ENCODE measurements at regions of chr7 and their contacts with region 1.

Region 1: DNA sequence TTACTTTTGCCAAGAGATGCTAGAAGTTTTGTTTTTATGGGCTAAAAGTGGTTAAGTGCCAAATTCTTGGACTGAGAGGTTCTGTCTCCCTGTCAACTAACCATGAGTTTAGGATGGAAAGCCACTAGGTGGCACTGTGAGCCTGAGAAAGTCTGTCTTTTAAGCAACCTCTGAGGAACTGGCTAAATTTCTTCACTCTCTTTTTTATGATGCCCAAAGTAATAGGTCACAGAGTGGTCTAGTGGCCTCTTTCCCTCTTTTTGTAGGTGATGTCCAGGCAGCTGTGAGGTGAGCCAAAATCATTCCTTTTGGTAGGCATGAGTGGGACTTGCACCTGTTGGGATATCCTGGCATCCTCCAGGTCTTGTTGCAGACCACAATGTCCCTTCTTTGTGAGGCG is 56.8 kb downstream of the SND1 start:
- DNase-seq: peak; percentile 61 to 71 (median 64)
- H3K4me3 ChIP-seq: no peak overlapping the region
- H3K4me3 Mint-ChIP-seq: no peak overlapping the region
- H3K27ac ChIP-seq: no peak overlapping the region
- H3K27ac Mint-ChIP-seq: no peak overlapping the region
- H3K4me1 ChIP-seq: no peaks in the 10 kb centered on the region
- H3K4me1 Mint-ChIP-seq: peaks cover 0 to 6% (median 2%) of the 10 kb centered on the region in 4 donors
- H3K27me3 ChIP-seq: no peaks in the 10 kb centered on the region
- H3K27me3 Mint-ChIP-seq: no peaks in the 10 kb centered on the region

Region 2: GRCh38 chr7:127726476-127726875 is 17.7 kb after region 1 on chr7:
- CTCF ChIA-PET with region 1: interaction called, 27 read pairs
- POLR2A ChIA-PET with region 1: no interaction called
- intact Hi-C with region 1: no loop called
- DNase-seq: no peak
- H3K4me3 ChIP-seq: no peak overlapping the region
- H3K4me3 Mint-ChIP-seq: no peak overlapping the region
- H3K27ac ChIP-seq: no peak overlapping the region
- H3K27ac Mint-ChIP-seq: peak overlapping the region in 1 of 7 donors; percentile 26
- H3K4me1 ChIP-seq: no peaks in the 10 kb centered on the region
- H3K4me1 Mint-ChIP-seq: peaks cover 0 to 5% (median 3%) of the 10 kb centered on the region in 4 donors
- H3K27me3 ChIP-seq: no peaks in the 10 kb centered on the region
- H3K27me3 Mint-ChIP-seq: no peaks in the 10 kb centered on the region

Region 3: DNA sequence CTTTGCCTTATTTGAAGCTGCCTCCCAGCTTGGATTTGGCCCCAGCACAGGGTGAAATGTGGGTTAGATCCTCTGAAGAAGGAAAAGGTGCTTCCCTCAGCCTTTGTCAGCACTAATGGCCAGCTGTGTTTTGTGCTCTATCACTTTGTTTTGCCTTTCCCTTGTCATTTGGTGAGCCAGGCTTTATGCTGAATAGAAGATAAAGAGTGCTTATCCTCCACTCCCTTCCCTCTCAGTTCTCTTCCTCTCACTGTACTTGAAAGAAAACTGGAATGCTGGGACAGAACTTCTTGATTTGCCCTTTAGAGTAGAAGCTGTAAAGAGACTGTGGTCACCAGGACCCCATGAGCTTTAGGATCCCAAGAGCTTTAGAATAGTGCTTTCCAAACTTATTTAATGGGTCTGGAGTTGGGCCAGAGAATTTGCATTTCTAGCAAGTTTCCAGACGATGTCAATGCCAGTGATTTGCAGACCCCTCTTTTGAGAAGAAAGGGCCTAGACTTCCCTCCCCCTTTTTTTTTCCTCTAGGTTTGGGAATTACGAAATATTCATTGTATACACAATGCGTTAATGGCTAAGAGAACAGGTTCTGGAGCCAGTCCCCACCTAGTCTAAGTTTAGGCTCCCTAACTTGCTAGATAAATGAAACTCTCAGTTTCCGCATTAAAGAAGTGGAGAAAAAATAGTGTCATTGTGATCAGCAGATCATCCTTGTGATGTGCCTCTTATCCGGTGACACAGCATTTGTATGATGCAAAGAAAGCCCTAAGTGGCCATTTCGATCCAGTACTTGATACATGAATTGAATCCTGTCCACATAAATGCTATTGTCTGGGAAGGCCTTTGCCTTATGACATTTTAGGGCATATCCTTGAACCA is 241.2 kb after region 1 on chr7:
- CTCF ChIA-PET with region 1: no interaction called
- POLR2A ChIA-PET with region 1: no interaction called
- intact Hi-C with region 1: no loop called
- DNase-seq: no peak
- H3K4me3 ChIP-seq: no peak overlapping the region
- H3K4me3 Mint-ChIP-seq: no peak overlapping the region
- H3K27ac ChIP-seq: no peak overlapping the region
- H3K27ac Mint-ChIP-seq: no peak overlapping the region
- H3K4me1 ChIP-seq: no peaks in the 10 kb centered on the region
- H3K4me1 Mint-ChIP-seq: peaks cover 0 to 7% (median 2%) of the 10 kb centered on the region in 4 donors
- H3K27me3 ChIP-seq: no peaks in the 10 kb centered on the region
- H3K27me3 Mint-ChIP-seq: no peaks in the 10 kb centered on the region

Region 4: DNA sequence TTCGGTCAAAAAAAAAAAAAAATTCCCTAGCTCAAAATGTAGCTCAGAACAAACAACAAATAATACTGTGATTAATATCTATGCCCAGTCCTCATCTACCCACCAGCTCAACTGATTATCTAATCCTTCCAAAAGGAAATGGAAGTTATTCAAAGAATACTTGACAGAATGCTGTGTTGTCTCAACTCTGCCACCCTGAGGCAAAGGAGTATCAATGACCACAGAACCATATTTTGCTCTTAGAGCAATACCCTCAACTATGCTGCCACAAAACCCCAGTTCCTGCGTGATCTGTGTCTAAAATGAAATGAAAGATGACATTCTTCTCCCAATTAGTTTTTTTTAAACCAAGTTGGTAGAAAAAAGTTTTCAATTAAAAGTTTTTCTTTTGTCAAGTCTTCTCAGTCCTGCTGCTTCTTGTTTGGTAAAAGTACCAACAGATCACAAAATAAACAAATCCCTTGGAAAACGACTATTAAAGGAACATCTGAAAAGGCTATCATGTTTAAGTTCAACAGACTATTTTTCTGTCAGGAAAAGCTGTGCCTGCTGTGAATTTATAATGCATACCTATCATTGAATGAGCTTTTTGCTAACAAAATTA is 613.4 kb after region 1 on chr7:
- CTCF ChIA-PET with region 1: interaction called, 18 read pairs
- POLR2A ChIA-PET with region 1: no interaction called
- intact Hi-C with region 1: no loop called
- DNase-seq: peak in 2 of 5 donors; percentile 10 to 20
- H3K4me3 ChIP-seq: no peak overlapping the region
- H3K4me3 Mint-ChIP-seq: peak overlapping the region in 3 of 8 donors; percentile 2 to 17 (median 8)
- H3K27ac ChIP-seq: no peak overlapping the region
- H3K27ac Mint-ChIP-seq: peak overlapping the region in 6 of 7 donors; percentile 0 to 65 (median 26)
- H3K4me1 ChIP-seq: peaks cover 17% of the 10 kb centered on the region
- H3K4me1 Mint-ChIP-seq: peaks cover 13 to 34% (median 23%) of the 10 kb centered on the region in 4 donors
- H3K27me3 ChIP-seq: no peaks in the 10 kb centered on the region
- H3K27me3 Mint-ChIP-seq: no peaks in the 10 kb centered on the region

Measured in CD4-positive, alpha-beta memory T cell (primary cell).